Caco-2 (cell line): ENCODE measurements at regions of chr2 and their contacts with region 1.

Region 1: GRCh38 chr2:96265840-96266679 is at the starts of genes CIAO1 and TMEM127:
- DNase-seq: peak; percentile 99
- H3K4me3 ChIP-seq: peak within 1 kb of the TSS; percentile 96
- H3K4me3 Mint-ChIP-seq: peak within 1 kb of the TSS; percentile 88
- H3K27ac Mint-ChIP-seq: peak within 1 kb of the TSS; percentile 67
- H3K4me1 ChIP-seq: peaks cover 29% of the 10 kb centered on the region
- H3K4me1 Mint-ChIP-seq: peaks cover 21% of the 10 kb centered on the region
- H3K27me3 ChIP-seq: no peaks in the 10 kb centered on the region
- H3K27me3 Mint-ChIP-seq: no peaks in the 10 kb centered on the region
- CTCF ChIP-seq: peak in 1 of 2 experiments; percentile 36
- total RNA-seq, gene CIAO1: 93.8 and 97.9 TPM in 2 replicates
- total RNA-seq, gene TMEM127: 43.3 and 49.1 TPM in 2 replicates

Region 2: DNA sequence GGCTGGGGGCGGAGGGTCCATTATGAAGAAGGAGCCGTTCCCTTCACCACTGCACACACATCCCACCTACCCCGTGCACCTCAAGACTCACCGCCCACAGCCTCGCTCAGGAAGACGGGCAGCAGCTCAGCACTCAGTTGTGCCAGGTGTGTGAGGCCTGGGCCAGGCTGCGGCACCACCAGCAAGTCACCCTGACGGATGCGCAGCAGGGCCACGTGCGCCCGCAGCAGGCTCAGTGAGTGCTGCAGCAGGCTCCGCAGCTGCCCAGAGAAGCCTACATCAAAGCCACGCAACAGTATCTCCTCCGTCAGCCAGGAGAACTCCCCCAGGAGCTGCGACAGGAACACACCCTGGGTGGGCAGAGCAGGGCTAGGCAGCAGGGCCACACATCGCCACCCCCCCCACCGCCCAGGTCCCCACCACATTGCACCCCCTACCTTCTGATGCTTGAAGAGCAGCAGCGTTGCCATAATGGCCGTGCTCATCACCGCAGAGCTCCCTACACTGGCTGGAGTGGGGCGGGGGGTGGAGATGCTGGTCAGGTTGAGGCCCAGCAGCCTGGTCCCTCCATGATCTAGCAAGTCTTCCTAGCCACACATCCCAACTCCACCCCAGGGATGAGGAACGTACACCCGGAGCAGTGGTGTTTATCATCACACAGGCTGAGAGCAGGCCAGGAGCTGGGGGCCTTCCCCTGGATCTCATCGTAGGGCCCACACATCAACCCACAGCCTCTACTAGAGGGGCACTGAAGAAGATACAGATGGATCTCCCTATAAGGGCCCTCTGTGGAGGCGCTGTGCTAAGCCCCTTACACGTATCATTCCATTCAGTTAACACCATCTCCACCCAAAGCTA is 241.5 kb before region 1 on chr2:
- CTCF ChIA-PET with region 1: interaction called, 4 read pairs
- POLR2A ChIA-PET with region 1: no interaction called
- intact Hi-C with region 1: loop called (anchors 10 kb)
- DNase-seq: peak in 1 of 2 experiments; percentile 29
- H3K4me3 ChIP-seq: no peak overlapping the region
- H3K4me3 Mint-ChIP-seq: no peak overlapping the region
- H3K27ac Mint-ChIP-seq: no peak overlapping the region
- H3K4me1 ChIP-seq: no peaks in the 10 kb centered on the region
- H3K4me1 Mint-ChIP-seq: peaks cover 5% of the 10 kb centered on the region
- H3K27me3 ChIP-seq: no peaks in the 10 kb centered on the region
- H3K27me3 Mint-ChIP-seq: no peaks in the 10 kb centered on the region
- CTCF ChIP-seq: no peak

Region 3: DNA sequence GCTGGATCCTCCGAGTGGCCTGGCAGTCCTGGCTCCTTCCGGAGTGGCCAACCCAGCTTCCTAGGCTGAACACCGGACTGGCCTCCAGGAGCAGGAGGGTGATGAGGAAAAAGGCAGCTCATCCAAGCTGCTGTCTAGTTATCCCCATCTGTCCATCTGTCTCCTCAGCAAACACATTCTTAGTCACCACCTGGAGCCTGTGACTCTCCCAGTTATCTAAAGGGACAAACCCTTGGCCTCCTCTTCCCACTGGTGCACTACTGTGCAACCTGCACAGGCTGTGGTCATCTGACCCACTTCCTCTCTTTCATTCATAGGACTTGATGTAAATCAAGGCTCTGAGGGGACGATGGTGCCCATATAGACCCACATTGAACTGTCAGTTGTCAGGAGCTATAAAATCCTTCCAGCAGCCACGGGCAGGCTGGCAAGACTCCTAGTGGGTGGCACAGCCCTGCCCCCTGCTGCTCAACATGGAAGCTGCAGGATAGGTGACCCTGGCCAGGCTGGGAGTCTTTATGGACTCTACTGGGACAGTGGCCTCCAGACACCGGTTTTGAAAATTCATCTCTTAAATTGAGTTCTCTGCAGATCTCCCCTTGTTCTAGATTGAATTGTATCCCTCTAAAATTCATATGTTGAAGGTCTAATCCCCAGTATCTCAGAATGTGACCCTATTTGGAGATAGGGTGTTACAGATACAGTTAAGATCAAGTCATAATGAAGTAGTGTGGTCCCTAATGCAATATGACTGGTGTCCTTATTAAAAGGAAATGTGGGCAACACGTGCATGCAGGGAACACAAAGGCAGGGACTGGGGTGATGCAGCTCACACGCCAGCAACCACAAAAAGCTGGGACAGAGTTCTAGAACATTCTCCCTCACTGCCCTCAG is 91.6 kb before region 1 on chr2:
- CTCF ChIA-PET with region 1: interaction called, 10 read pairs
- POLR2A ChIA-PET with region 1: no interaction called
- intact Hi-C with region 1: no loop called
- DNase-seq: peak; percentile 76 to 86
- H3K4me3 ChIP-seq: no peak overlapping the region
- H3K4me3 Mint-ChIP-seq: no peak overlapping the region
- H3K27ac Mint-ChIP-seq: no peak overlapping the region
- H3K4me1 ChIP-seq: no peaks in the 10 kb centered on the region
- H3K4me1 Mint-ChIP-seq: no peaks in the 10 kb centered on the region
- H3K27me3 ChIP-seq: no peaks in the 10 kb centered on the region
- H3K27me3 Mint-ChIP-seq: no peaks in the 10 kb centered on the region
- CTCF ChIP-seq: peak; percentile 89 to 96

Region 4: GRCh38 chr2:96208143-96209010 is 57.7 kb before region 1 on chr2 and contains the start of gene STARD7:
- CTCF ChIA-PET with region 1: interaction called, 21 read pairs
- POLR2A ChIA-PET with region 1: interaction called, 12 read pairs
- intact Hi-C with region 1: loop called (anchors 1 kb)
- DNase-seq: peak; percentile 99 to 100
- H3K4me3 ChIP-seq: peak within 1 kb of the TSS; percentile 68
- H3K4me3 Mint-ChIP-seq: peak within 1 kb of the TSS; percentile 96
- H3K27ac Mint-ChIP-seq: peak within 1 kb of the TSS; percentile 80
- H3K4me1 ChIP-seq: peaks cover 31% of the 10 kb centered on the region
- H3K4me1 Mint-ChIP-seq: peaks cover 28% of the 10 kb centered on the region
- H3K27me3 ChIP-seq: no peaks in the 10 kb centered on the region
- H3K27me3 Mint-ChIP-seq: no peaks in the 10 kb centered on the region
- CTCF ChIP-seq: peak; percentile 11 to 26
- total RNA-seq, gene STARD7: 214 and 224 TPM in 2 replicates

Region 5: DNA sequence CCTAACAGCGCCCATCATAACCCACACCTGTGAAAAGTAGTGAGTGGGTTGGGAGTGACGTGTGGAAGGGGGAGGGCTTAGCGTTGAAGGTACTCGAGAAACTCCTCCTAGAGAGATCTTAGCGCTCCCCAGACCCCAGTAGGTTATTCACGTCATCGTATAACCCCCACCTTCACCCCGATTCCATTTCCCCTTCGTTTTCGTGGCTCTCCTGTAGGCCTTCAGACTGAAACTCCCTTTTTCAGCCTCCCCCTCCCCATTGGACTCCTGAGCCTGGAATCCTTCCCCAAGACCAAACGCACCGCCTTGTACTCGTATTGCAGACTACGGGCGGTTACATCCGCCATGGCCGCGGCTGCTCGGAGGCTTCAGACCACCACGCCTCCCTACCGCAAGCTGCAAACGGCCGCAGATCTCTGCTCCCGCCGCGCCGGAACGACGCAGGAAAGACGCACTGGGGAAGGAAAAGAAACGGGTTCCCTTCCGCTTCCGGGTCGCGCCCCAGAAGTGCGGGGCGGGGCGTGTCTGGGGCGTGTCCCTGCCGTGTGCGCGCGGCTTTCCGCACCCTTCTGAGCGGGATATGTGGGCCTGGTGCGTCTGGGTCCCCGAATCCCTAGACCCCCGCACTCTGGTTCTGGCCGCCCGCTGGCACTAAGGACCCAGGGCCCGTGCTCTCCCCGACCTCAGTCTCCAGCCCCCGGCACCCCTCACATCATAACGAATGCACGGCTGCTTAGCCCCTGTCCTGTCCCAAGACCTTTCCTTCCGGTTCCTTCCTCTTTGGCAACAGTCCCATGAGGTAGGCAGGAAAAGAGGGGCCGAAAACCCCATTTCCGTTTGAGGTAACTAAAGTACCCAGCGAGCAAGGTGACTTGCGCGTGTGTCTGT is 39.3 kb after region 1 on chr2 and contains the start of gene SNRNP200:
- CTCF ChIA-PET with region 1: no interaction called
- POLR2A ChIA-PET with region 1: no interaction called
- intact Hi-C with region 1: loop called (anchors 1 kb)
- DNase-seq: peak; percentile 91
- H3K4me3 ChIP-seq: peak within 1 kb of the TSS; percentile 51
- H3K4me3 Mint-ChIP-seq: peak within 1 kb of the TSS; percentile 96
- H3K27ac Mint-ChIP-seq: peak within 1 kb of the TSS; percentile 99
- H3K4me1 ChIP-seq: no peaks in the 10 kb centered on the region
- H3K4me1 Mint-ChIP-seq: peaks cover 17% of the 10 kb centered on the region
- H3K27me3 ChIP-seq: no peaks in the 10 kb centered on the region
- H3K27me3 Mint-ChIP-seq: no peaks in the 10 kb centered on the region
- CTCF ChIP-seq: no peak
- total RNA-seq, gene SNRNP200: 240 and 259 TPM in 2 replicates